CD14-positive monocyte (primary cell): ENCODE measurements at regions of chr20 and their contacts with region 1.

Region 1: GRCh38 chr20:36886859-36887751 is 11.2 kb downstream of the TLDC2 start:
- DNase-seq: peak; percentile 57 to 66 (median 60)
- H3K4me3 ChIP-seq: no peak overlapping the region
- H3K4me3 Mint-ChIP-seq: no peak overlapping the region
- H3K27ac ChIP-seq: peak overlapping the region; percentile 48 to 55
- H3K27ac Mint-ChIP-seq: peak overlapping the region; percentile 50 to 87 (median 72)
- H3K4me1 ChIP-seq: peaks cover 9 to 12% of the 10 kb centered on the region in 2 donors
- H3K4me1 Mint-ChIP-seq: peaks cover 25% of the 10 kb centered on the region
- H3K27me3 ChIP-seq: no peaks in the 10 kb centered on the region
- H3K27me3 Mint-ChIP-seq: peaks cover 0 to 1% (median 0%) of the 10 kb centered on the region in 3 donors
- CTCF ChIP-seq: peak; percentile 93

Region 2: DNA sequence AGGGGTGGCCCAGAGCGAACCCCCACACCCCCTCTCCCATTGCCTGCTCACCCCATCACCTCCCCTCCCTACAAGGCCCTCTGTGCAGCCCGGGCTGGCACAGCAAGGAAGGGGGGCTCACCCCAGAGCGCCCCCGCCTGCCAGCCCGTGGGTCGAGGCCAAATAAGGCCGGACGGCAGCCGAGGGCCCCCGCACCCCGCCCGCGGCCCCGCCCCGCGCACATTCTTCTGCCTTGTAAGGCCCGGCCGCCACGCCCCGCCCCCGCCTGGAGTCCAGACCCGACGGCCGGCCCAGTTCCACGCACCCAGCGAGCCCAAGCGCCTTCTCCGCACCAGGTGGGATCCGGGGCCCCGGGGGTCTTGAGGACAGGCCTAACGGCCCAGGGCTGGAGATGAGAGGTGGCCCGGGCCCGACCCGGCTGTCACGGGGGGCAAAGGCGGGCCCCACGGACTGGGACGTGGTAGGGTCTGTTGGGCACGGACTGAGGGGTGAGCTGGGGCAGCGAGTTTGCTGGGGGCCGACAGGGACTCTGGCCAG is 345.8 kb before region 1 on chr20 and contains the start of gene MYL9:
- intact Hi-C with region 1: loop called in 1 of 2 experiments (anchors 10 kb)
- DNase-seq: peak; percentile 37 to 43 (median 42)
- H3K4me3 ChIP-seq: peak within 1 kb of the TSS; percentile 1 to 68 (median 30)
- H3K4me3 Mint-ChIP-seq: peak within 1 kb of the TSS; percentile 64 to 72
- H3K27ac ChIP-seq: no peak within 1 kb of the TSS
- H3K27ac Mint-ChIP-seq: peak within 1 kb of the TSS in 1 of 7 donors; percentile 50
- H3K4me1 ChIP-seq: peaks cover 9 to 13% of the 10 kb centered on the region in 2 donors
- H3K4me1 Mint-ChIP-seq: peaks cover 1% of the 10 kb centered on the region
- H3K27me3 ChIP-seq: no peaks in the 10 kb centered on the region
- H3K27me3 Mint-ChIP-seq: peaks cover 3 to 7% (median 6%) of the 10 kb centered on the region in 3 donors
- CTCF ChIP-seq: no peak
- polyA plus RNA-seq, gene MYL9: 0.08 to 0.20 TPM in 2 of 3 donors, not detected in the other

Region 3: GRCh38 chr20:36613974-36614373 is 273.1 kb before region 1 on chr20:
- intact Hi-C with region 1: loop called in 1 of 2 experiments (anchors 5 kb)
- DNase-seq: no peak
- H3K4me3 ChIP-seq: no peak overlapping the region
- H3K4me3 Mint-ChIP-seq: no peak overlapping the region
- H3K27ac ChIP-seq: peak overlapping the region in 1 of 2 donors; percentile 65
- H3K27ac Mint-ChIP-seq: peak overlapping the region in 3 of 7 donors; percentile 27 to 59 (median 57)
- H3K4me1 ChIP-seq: no peaks in the 10 kb centered on the region
- H3K4me1 Mint-ChIP-seq: peaks cover 3% of the 10 kb centered on the region
- H3K27me3 ChIP-seq: no peaks in the 10 kb centered on the region
- H3K27me3 Mint-ChIP-seq: peaks cover 0 to 3% (median 0%) of the 10 kb centered on the region in 3 donors
- CTCF ChIP-seq: no peak

Region 4: GRCh38 chr20:37081717-37082289 is 194.7 kb after region 1 on chr20:
- intact Hi-C with region 1: no loop called
- DNase-seq: peak in 2 of 3 donors; percentile 6 to 7
- H3K4me3 ChIP-seq: no peak overlapping the region
- H3K4me3 Mint-ChIP-seq: no peak overlapping the region
- H3K27ac ChIP-seq: peak overlapping the region in 1 of 2 donors; percentile 58
- H3K27ac Mint-ChIP-seq: peak overlapping the region in 6 of 7 donors; percentile 2 to 92 (median 63)
- H3K4me1 ChIP-seq: no peaks in the 10 kb centered on the region
- H3K4me1 Mint-ChIP-seq: peaks cover 4% of the 10 kb centered on the region
- H3K27me3 ChIP-seq: no peaks in the 10 kb centered on the region
- H3K27me3 Mint-ChIP-seq: peaks cover 0 to 3% (median 2%) of the 10 kb centered on the region in 3 donors
- CTCF ChIP-seq: peak; percentile 39